GM18951 (cell line): ENCODE measurements at regions of chr2 and their contacts with region 1.

Region 1: GRCh38 chr2:41782306-41783158 is 265.3 kb upstream of the PKDCC start:
- POLR2A ChIP-seq: no peak

Region 2: DNA sequence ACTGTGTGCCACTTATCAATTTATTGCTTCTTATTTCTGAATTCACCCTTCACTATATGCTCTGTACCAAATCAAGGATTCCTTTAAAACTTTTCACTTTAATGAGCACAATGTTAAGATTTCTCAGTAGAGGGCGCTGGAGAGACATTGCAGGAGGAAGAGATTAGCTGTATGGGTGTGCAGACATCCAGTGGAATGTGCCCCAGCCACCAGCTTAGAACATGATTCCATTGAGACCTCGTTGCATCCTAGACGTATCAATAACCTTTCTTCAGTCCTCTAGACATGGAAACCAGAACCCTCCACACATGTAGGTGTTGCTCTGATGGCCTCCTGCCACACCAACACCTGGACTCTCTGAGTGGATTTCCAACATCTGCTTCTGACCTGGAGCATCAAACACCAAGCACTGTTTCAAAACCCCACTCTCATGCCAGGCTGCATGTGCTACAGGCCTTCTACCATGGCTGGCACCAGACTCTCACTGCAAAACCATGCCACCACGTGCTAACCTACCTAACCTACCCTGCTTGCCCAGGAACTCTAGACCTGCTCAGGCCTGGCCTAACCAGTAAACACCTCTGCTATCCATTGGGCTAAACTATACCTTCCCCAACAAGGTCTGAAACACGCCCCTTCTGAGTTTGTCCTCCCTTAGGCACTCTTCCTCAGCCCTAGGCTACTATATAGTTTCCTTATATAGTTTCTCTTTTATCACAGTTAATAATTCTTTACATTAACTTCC is 367.9 kb before region 1 on chr2:
- in situ Hi-C with region 1: loop called (anchors 25 kb)
- POLR2A ChIP-seq: no peak

Region 3: DNA sequence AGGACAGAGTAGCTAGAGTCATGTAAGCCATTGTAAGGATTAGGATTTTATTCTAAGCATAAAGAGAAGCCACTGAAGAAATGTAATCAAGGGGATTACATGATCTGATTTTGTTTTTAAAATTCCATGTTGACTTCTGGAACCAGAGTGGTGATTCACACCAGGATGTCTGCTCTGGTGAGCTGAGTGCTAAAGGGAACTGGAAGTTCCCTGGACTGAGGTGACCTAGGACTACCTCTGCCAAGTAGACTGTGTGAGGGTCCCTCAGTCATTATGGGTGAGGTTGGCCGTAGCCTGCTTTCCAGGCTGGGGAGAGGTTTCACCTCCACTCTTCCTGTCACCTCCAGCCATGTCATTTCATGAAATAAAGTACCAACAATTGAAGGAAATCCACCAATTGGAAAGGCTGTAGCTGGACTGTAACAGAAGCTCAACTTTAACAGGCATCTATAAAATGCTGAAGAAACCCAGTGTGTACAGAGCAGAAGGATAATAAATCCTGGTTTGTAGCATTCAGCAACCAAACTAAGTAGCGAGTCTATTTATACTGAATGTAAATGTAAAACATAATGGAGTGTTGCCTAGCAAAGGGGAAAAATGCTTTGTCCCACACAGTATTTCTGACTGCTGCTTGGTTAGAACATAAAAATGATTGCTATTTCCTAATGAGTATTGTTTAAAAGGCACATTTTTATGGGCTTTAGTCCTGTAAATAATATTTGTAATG is 242.1 kb before region 1 on chr2:
- in situ Hi-C with region 1: no loop called
- POLR2A ChIP-seq: no peak